ENCODE measurements at regions of chr1 and their contacts with region 1.

Region 1: DNA sequence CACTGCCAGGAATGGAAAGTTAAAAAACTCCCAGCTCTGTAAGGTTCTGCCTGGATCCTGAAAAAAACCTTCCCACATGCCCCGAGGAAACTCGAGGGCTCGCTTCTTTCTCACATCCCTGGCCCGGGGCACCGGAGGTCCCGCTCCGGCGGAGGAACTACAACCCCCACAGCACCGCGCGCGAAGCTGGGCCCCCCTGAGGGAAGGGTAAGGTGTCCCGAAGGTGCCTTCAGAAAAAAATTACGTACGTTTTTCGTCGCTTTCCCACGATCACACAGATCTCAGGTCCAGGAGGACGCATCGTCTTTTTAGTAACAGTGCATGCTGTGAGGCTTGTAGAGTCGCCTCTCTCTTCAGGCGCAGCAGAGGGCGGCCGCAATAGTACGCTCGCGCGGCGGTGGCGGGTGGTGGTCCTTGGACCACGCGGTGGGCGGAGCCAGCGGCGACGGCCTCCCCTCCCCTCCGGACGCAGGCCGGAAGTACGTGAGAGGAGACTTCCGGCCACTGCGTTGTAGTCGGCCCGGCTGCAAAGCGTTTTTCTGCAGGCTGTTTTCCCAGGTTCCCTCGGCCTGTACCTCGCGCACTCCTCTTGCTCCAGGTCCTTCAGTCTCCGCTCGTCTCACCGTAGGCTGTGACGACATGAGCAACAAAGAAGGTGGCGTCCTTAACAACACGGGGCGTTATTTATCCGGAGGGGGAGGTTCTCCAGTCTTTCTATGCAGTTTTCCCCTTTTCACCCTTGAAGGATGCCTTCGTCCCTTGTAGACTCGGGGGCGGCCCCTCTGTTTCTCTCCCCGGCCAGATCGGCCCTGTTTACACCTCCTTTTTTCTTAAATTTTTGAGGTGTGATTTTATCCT is at the start of gene TSNAX:
- DNase-seq: peak; percentile 83 to 97 (median 89)
- ATAC-seq: peak; percentile 91
- H3K4me3 ChIP-seq: peak within 1 kb of the TSS; percentile 81 to 94
- H3K4me3 Mint-ChIP-seq: peak within 1 kb of the TSS; percentile 97
- H3K27ac ChIP-seq: peak within 1 kb of the TSS; percentile 93 to 98
- H3K27ac Mint-ChIP-seq: peak within 1 kb of the TSS; percentile 100
- H3K4me1 ChIP-seq: peaks cover 44% of the 10 kb centered on the region
- H3K4me1 Mint-ChIP-seq: peaks cover 46% of the 10 kb centered on the region
- H3K27me3 ChIP-seq: no peaks in the 10 kb centered on the region
- H3K27me3 Mint-ChIP-seq: no peaks in the 10 kb centered on the region
- CTCF ChIP-seq: no peak
- total RNA-seq, gene TSNAX: 19.7 to 21.7 TPM

Region 2: GRCh38 chr1:230642263-230642959 is 886.0 kb before region 1 on chr1 and contains the start of gene COG2:
- CTCF ChIA-PET with region 1: no interaction called
- POLR2A ChIA-PET with region 1: no interaction called
- intact Hi-C with region 1: loop called in 1 of 2 experiments (anchors 5 kb)
- DNase-seq: peak; percentile 92 to 99 (median 96)
- ATAC-seq: peak; percentile 96
- H3K4me3 ChIP-seq: peak within 1 kb of the TSS; percentile 72 to 92
- H3K4me3 Mint-ChIP-seq: peak within 1 kb of the TSS; percentile 99
- H3K27ac ChIP-seq: peak within 1 kb of the TSS; percentile 73 to 82
- H3K27ac Mint-ChIP-seq: peak within 1 kb of the TSS; percentile 96
- H3K4me1 ChIP-seq: peaks cover 36% of the 10 kb centered on the region
- H3K4me1 Mint-ChIP-seq: peaks cover 54% of the 10 kb centered on the region
- H3K27me3 ChIP-seq: peaks cover 0 to 2% of the 10 kb centered on the region in 2 experiments
- H3K27me3 Mint-ChIP-seq: peaks cover 13% of the 10 kb centered on the region
- CTCF ChIP-seq: peak; percentile 100
- total RNA-seq, gene COG2: 20.1 to 25.7 TPM

Region 3: GRCh38 chr1:231240883-231241735 is 287.3 kb before region 1 on chr1 and contains the start of gene GNPAT:
- CTCF ChIA-PET with region 1: interaction called, 4 read pairs
- POLR2A ChIA-PET with region 1: no interaction called
- intact Hi-C with region 1: loop called in 1 of 2 experiments (anchors 1 kb)
- DNase-seq: peak; percentile 84 to 96 (median 91)
- ATAC-seq: peak; percentile 96
- H3K4me3 ChIP-seq: peak within 1 kb of the TSS; percentile 77
- H3K4me3 Mint-ChIP-seq: peak within 1 kb of the TSS; percentile 88
- H3K27ac ChIP-seq: peak within 1 kb of the TSS; percentile 79 to 80
- H3K27ac Mint-ChIP-seq: peak within 1 kb of the TSS; percentile 91
- H3K4me1 ChIP-seq: peaks cover 35% of the 10 kb centered on the region
- H3K4me1 Mint-ChIP-seq: peaks cover 78% of the 10 kb centered on the region
- H3K27me3 ChIP-seq: no peaks in the 10 kb centered on the region
- H3K27me3 Mint-ChIP-seq: no peaks in the 10 kb centered on the region
- CTCF ChIP-seq: no peak
- total RNA-seq, gene GNPAT: 10.4 to 11.0 TPM

Region 4: DNA sequence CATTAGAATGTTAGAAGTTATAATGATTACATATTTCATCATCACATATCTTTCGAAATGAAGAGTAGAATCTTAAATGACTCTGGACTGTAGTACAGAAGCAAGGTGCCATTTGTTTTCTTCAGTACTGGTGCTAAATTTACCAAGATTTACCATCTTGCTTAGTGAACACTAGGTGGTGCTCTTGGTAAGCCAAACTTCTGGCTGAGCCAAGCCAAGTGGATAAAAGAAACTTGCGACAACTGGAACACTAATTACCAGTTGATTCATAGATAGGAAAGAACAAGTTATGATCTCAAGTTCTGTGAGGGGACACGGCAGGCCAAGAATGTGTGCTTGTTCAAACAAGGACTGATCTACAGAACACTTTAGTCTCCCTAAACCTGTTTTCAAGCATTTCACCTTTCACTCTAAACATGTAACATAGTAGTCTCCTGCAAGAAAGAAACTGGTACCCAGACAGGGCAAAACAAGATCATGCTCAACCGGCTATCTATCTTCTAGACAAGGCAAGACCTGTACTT is 170.5 kb before region 1 on chr1:
- CTCF ChIA-PET with region 1: interaction called, 5 read pairs
- POLR2A ChIA-PET with region 1: no interaction called
- intact Hi-C with region 1: loop called (anchors 1 to 5 kb)
- DNase-seq: peak in 6 of 9 experiments; percentile 27 to 72 (median 45)
- ATAC-seq: peak; percentile 88
- H3K4me3 ChIP-seq: no peak overlapping the region
- H3K4me3 Mint-ChIP-seq: no peak overlapping the region
- H3K27ac ChIP-seq: no peak overlapping the region
- H3K27ac Mint-ChIP-seq: peak overlapping the region; percentile 9
- H3K4me1 ChIP-seq: no peaks in the 10 kb centered on the region
- H3K4me1 Mint-ChIP-seq: peaks cover 6% of the 10 kb centered on the region
- H3K27me3 ChIP-seq: no peaks in the 10 kb centered on the region
- H3K27me3 Mint-ChIP-seq: no peaks in the 10 kb centered on the region
- CTCF ChIP-seq: peak; percentile 71

Region 5: DNA sequence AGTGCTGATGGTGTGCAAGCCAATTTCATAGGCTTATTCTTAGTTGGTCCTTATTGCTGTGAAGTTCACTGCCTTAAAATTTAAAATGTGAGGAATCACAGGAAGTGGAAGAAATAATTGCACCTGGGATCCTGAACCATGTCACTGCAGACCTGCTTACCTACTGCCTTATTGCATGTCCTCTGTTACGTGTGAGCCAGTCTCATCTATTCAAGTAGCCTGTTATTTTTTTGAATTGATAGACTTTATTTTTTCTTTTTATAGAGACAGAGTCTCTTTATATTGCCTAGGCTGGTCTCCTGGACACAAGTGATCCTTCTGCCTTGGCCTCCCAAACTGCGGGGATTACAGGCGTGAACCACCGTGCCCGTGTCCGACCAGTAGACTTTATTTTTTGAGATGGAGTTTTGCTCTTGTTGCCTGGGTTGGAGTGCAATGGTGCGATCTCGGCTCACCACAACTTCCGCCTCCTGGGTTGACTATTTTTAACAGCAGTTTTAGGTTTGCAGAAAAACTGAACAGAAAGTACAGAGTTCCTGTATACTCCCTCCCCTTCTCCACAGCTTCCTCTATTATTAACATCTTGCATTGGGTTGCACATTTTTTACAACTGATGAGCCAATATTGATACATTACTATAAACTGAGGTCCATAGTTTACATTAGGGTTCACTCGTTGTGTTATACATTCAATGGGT is 84.1 kb after region 1 on chr1:
- CTCF ChIA-PET with region 1: no interaction called
- POLR2A ChIA-PET with region 1: no interaction called
- intact Hi-C with region 1: loop called in 1 of 2 experiments (anchors 5 kb)
- DNase-seq: peak in 8 of 9 experiments; percentile 32 to 75 (median 60)
- ATAC-seq: peak; percentile 91
- H3K4me3 ChIP-seq: peak overlapping the region; percentile 23 to 47
- H3K4me3 Mint-ChIP-seq: peak overlapping the region; percentile 73
- H3K27ac ChIP-seq: peak overlapping the region; percentile 41 to 48
- H3K27ac Mint-ChIP-seq: peak overlapping the region; percentile 85
- H3K4me1 ChIP-seq: peaks cover 51% of the 10 kb centered on the region
- H3K4me1 Mint-ChIP-seq: peaks cover 60% of the 10 kb centered on the region
- H3K27me3 ChIP-seq: no peaks in the 10 kb centered on the region
- H3K27me3 Mint-ChIP-seq: no peaks in the 10 kb centered on the region
- CTCF ChIP-seq: no peak

Region 6: DNA sequence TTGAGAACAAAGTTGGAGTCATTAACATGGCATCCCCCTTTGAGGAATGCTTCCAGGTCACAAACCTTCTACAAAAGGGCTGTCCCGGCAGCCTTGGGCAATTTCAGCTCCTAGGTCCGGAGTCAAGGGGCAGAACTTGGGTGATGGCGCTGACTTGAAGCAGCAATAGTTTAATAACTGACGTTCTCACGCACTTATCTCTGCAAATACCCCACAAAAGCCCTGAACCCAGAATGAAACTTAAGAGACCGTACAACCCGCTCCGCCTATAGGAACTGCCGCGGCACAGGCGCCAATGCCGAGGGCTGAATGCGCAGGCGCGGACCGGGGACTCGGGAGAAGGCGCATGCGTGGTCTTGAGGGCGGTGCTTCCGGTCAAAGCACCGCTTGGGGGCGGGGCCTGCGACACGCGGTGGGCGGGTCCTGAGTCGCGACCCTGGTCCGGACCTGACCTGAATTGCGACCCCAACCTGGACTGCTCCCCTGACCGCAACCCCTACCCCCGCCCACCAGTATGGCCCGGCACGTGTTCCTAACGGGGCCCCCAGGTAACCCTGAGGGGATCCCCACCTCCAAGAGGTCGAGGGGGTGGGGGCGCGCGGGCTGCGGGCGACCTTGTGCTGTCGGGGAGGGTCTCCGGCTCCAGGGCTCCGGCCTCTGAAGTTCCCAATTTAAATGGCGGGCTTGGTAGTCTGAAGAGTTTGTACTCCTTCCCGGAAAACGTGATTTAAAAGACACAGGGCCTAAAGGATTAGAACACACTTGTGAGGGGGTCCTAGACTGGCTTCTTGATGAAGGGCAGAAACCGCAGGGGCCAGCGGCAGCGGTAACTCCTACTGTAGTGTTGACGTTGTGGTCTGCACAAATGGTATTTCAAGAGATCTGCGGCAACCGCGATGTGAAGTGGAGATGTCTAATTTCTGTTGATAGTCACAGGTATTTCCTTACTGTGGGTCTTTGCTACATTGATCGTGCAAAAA is 1422.1 kb after region 1 on chr1 and contains the start of gene NTPCR:
- CTCF ChIA-PET with region 1: no interaction called
- POLR2A ChIA-PET with region 1: no interaction called
- intact Hi-C with region 1: loop called in 1 of 2 experiments (anchors 5 kb)
- DNase-seq: peak; percentile 87 to 98 (median 95)
- ATAC-seq: peak; percentile 83
- H3K4me3 ChIP-seq: peak within 1 kb of the TSS; percentile 83 to 90
- H3K4me3 Mint-ChIP-seq: peak within 1 kb of the TSS; percentile 96
- H3K27ac ChIP-seq: peak within 1 kb of the TSS; percentile 56 to 64
- H3K27ac Mint-ChIP-seq: peak within 1 kb of the TSS; percentile 94
- H3K4me1 ChIP-seq: peaks cover 28% of the 10 kb centered on the region
- H3K4me1 Mint-ChIP-seq: peaks cover 44% of the 10 kb centered on the region
- H3K27me3 ChIP-seq: no peaks in the 10 kb centered on the region
- H3K27me3 Mint-ChIP-seq: no peaks in the 10 kb centered on the region
- CTCF ChIP-seq: no peak
- total RNA-seq, gene NTPCR: 3.4 to 3.9 TPM

Measured in CD8-positive, alpha-beta T cell (primary cell).